Common myeloid progenitor, CD34-positive (primary cell): ENCODE measurements at regions of chr1 and their contacts with region 1.

Region 1: DNA sequence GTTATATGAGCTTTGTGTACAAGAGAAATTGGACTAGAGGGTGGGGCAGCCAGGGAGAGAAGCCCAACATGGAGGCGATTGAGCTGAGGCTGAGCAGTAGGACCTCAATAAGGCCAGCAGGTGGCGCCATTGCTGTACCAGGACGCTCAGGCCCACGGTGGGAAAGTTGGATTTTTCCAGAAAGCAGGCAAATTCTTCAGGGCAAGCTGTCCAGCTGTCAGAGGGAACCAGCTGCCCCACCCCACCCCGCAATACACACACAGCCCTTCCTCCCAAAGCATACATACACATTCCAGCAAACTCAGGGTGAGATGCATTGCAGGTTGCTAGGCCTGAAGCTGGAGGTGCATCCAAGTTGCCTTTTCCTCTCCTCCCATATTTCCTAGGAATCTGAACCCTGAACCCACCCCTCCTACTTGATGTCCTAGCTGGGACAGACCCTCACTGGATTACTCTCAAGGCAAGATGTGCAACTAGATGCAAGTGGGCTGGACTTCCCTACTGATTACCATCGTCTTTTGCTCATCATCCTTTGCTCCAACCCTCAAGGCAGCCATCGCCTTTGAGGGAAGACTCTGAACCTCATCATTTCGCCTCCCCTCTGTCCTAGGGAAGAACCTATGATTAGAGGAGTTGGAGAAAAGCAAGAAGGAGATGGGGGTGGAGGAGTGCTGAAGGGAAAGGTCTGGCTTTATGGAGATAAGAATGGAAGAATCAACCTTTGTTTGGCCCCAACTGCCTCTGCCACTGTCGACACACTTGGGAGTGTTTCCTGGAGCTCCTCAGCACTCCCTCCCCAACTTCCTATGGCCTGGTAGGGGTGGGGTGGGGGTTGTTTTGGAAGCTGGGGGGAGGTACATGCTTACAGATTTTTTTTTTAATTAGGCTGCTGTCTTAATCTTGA is 25.5 kb downstream of the CD34 start:
- DNase-seq: peak; percentile 75 to 87 (median 86)
- H3K4me3 ChIP-seq: no peak overlapping the region
- H3K27ac ChIP-seq: no peak overlapping the region
- H3K4me1 ChIP-seq: peaks cover 7 to 77% (median 64%) of the 10 kb centered on the region in 4 experiments
- H3K27me3 ChIP-seq: no peaks in the 10 kb centered on the region

Region 2: GRCh38 chr1:207828485-207829158 is 56.8 kb before region 1 on chr1:
- CTCF ChIA-PET with region 1: interaction called, 145 read pairs
- POLR2A ChIA-PET with region 1: interaction called, 4 read pairs
- DNase-seq: peak; percentile 96
- H3K4me3 ChIP-seq: peak overlapping the region in 1 of 7 experiments; percentile 30
- H3K27ac ChIP-seq: peak overlapping the region in 1 of 2 experiments; percentile 37
- H3K4me1 ChIP-seq: peaks cover 54 to 92% (median 87%) of the 10 kb centered on the region in 4 experiments
- H3K27me3 ChIP-seq: no peaks in the 10 kb centered on the region

Region 3: GRCh38 chr1:207897188-207897587 is 11.8 kb after region 1 on chr1:
- CTCF ChIA-PET with region 1: interaction called, 157 read pairs
- POLR2A ChIA-PET with region 1: interaction called, 4 read pairs
- DNase-seq: peak; percentile 51 to 65 (median 61)
- H3K4me3 ChIP-seq: no peak overlapping the region
- H3K27ac ChIP-seq: peak overlapping the region in 1 of 2 experiments; percentile 5
- H3K4me1 ChIP-seq: peaks cover 13 to 75% (median 46%) of the 10 kb centered on the region in 4 experiments
- H3K27me3 ChIP-seq: no peaks in the 10 kb centered on the region

Region 4: DNA sequence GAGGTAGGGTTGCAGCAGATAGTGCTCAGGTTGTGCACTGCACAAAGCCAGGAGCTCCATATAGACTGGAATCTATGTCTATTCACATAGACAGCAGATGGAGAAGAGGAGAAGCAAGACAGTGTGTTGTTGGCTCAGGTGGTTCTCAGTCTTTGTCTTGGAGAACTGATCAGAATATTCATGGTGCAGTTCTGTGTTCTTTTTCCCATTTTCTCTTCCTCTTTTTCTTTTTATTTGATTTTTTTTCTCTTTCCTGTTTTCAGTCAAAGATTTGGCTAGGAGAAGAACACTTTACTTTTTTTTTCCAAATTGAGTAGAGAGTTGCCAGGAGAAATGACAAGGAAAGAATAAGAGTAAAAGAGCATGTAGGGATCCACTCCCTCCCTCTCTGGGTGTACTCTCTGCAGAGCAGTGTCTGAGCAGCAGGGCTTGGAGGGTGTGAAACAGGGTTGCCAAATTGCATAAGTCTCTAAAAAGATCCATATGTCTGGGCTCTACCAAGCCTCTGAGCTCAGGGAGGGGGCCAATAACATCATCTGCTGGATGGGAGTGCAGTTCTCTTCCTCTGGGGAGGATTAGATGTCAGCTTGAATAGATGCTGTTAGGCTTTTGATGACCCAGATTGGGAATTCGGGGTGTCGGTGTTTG is 34.3 kb after region 1 on chr1:
- CTCF ChIA-PET with region 1: interaction called, 11 read pairs
- POLR2A ChIA-PET with region 1: no interaction called
- DNase-seq: peak in 2 of 3 donors; percentile 52 to 69
- H3K4me3 ChIP-seq: peak overlapping the region in 3 of 7 experiments; percentile 2 to 60 (median 12)
- H3K27ac ChIP-seq: no peak overlapping the region
- H3K4me1 ChIP-seq: peaks cover 47 to 90% (median 78%) of the 10 kb centered on the region in 4 experiments
- H3K27me3 ChIP-seq: no peaks in the 10 kb centered on the region

Region 5: GRCh38 chr1:208013210-208013609 is 127.8 kb after region 1 on chr1:
- CTCF ChIA-PET with region 1: no interaction called
- POLR2A ChIA-PET with region 1: no interaction called
- DNase-seq: no peak
- H3K4me3 ChIP-seq: no peak overlapping the region
- H3K27ac ChIP-seq: no peak overlapping the region
- H3K4me1 ChIP-seq: no peaks in the 10 kb centered on the region
- H3K27me3 ChIP-seq: peaks cover 0 to 2% (median 0%) of the 10 kb centered on the region in 5 experiments

Region 6: GRCh38 chr1:208036109-208036808 is 150.9 kb after region 1 on chr1:
- CTCF ChIA-PET with region 1: no interaction called
- POLR2A ChIA-PET with region 1: no interaction called
- DNase-seq: no peak
- H3K4me3 ChIP-seq: no peak overlapping the region
- H3K27ac ChIP-seq: no peak overlapping the region
- H3K4me1 ChIP-seq: no peaks in the 10 kb centered on the region
- H3K27me3 ChIP-seq: peaks cover 0 to under 1% (median 0%) of the 10 kb centered on the region in 5 experiments

Region 7: GRCh38 chr1:208270651-208271111 is 385.3 kb after region 1 on chr1:
- CTCF ChIA-PET with region 1: no interaction called
- POLR2A ChIA-PET with region 1: no interaction called
- DNase-seq: no peak
- H3K4me3 ChIP-seq: no peak overlapping the region
- H3K27ac ChIP-seq: no peak overlapping the region
- H3K4me1 ChIP-seq: no peaks in the 10 kb centered on the region
- H3K27me3 ChIP-seq: peaks cover 0 to 37% (median 6%) of the 10 kb centered on the region in 5 experiments